ENCODE measurements at regions of chr10 and their contacts with region 1.

Region 1: DNA sequence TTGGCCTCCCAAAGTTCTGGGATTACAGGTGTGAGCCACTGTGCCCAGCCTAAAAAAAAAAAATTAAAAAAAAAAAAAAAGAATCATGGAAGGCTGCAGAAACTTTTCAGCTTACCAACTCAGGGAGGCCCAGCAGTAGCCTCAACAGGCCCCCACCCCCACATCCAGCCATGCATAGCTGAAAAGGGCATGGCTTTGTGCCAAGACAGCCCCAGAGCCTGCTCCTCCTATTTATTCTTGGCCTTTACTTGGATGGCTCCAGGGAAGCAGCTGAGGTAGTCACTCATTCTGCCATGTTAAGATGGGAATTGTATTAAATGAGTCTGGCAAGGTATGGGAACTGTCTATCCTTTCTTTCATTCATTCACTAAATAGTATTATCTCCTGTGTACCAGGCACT is 13.7 kb upstream of the CNNM2 start:
- DNase-seq: no peak
- H3K4me3 ChIP-seq: no peak overlapping the region
- H3K27ac ChIP-seq: no peak overlapping the region
- H3K4me1 ChIP-seq: no peaks in the 10 kb centered on the region
- H3K27me3 ChIP-seq: no peaks in the 10 kb centered on the region
- CTCF ChIP-seq: no peak

Region 2: DNA sequence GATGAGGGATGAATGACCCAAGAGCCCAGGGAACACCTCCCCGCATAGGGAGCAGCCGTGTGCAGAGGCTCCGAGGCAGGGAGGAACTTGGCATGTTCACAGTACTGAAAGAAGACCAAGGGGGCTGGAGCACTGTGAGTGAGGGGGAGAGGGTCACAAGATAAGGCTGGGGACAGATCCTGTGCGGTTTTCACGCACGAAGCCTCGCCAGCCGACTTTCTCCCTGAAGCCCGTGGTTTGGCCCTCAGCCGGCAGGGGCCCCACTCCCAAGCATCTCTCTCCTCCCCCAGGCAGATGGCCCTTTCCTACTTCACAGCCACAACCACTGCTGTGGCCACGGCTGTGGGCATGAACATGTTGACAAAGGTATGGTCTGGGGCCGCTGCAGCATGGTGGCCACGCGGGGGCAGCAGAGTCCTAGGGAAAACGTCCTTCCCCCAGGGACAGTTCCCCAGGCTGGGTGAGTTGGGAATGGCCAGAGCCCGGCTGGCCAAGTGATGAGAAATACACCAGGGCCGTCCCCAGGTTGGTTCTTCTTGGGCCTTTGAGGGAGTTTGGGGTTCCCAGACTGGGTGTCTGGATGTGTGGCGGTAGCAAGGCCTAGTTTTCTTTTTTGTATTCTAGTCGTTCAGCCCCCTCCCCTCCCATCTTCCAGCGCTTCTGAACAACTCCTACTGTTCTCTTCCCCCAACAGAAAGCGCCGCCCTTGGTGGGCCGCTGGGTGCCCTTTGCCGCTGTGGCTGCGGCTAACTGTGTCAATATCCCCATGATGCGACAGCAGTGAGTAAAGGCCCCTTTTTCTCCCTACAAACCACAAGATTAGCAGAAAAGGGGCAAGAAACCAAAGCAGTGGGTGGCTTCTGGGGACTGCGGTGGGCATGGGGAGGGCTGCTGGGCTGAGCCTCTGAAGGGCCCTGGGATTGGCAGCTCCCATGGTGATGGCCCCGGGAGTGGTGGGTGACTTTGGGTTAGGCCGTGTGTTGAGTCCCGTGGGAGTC is 175.0 kb before region 1 on chr10:
- intact Hi-C with region 1: loop called (anchors 5 kb)
- DNase-seq: peak; percentile 84
- H3K4me3 ChIP-seq: no peak overlapping the region
- H3K27ac ChIP-seq: no peak overlapping the region
- H3K4me1 ChIP-seq: no peaks in the 10 kb centered on the region
- H3K27me3 ChIP-seq: no peaks in the 10 kb centered on the region
- CTCF ChIP-seq: peak; percentile 86

Measured in colonic mucosa (tissue), 4 donors.